Dendritic cell treated with granulocyte-macrophage colony-stimulating factor and Interleukin-4, amounts not matched to agents 40 ng/mL and 50 ng/mL, for 4 days (primary cell): ENCODE measurements at regions of chr7 and their contacts with region 1.

Region 1: GRCh38 chr7:150778738-150779301 is 21.3 kb downstream of the TMEM176B start:
- H3K4me3 Mint-ChIP-seq: peak overlapping the region; percentile 61
- H3K27ac Mint-ChIP-seq: peak overlapping the region; percentile 72
- H3K4me1 Mint-ChIP-seq: peaks cover 61% of the 10 kb centered on the region
- H3K27me3 Mint-ChIP-seq: no peaks in the 10 kb centered on the region

Region 2: DNA sequence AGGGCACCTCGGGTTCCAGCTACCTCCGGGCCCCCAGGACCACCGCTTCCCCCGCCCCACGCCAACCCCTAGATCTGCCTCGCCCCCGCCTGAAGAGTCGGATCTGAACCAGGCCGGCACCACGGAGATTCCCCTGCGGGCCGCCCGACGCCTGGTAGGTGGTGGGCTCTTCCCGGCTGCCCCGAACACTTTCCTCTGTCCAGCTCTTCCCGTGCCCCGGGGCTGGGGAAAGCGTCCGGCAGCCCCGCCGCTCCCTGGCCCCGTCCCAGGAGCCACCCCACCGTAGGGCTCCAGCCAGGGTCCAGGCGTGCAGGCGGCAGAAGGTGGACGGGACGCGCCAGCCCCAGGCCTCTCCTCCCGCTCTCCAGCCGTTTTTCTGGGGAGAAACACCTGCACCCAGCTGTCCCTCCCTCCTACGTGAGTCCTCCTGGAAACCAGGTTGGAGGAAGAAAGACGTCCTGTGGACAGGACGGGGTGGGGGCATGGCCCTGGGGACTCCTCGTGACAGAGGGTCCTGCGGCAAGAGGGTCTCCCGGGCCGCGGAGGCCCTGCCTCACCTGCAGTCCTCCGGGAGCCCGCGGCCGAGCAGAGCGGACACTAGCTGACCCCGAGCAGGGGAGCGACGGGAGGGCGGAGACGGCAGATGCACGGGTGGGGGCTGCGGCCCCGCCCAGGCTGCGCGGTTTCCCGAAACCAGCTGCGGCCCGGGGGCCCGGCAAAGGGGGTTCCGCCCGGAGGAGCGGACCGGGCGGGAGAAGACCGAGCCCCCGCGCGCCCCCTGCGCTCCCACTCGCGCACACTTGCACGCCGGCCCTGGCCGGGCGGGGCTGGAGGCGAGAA is 21.1 kb after region 1 on chr7 and contains the start of gene TMEM176B:
- intact Hi-C with region 1: loop called (anchors 2 kb)
- H3K4me3 Mint-ChIP-seq: peak within 1 kb of the TSS; percentile 96
- H3K27ac Mint-ChIP-seq: peak within 1 kb of the TSS; percentile 96
- H3K4me1 Mint-ChIP-seq: peaks cover 48% of the 10 kb centered on the region
- H3K27me3 Mint-ChIP-seq: no peaks in the 10 kb centered on the region

Region 3: GRCh38 chr7:150876817-150877526 is 98.2 kb after region 1 on chr7:
- intact Hi-C with region 1: loop called (anchors 1 kb)
- H3K4me3 Mint-ChIP-seq: peak overlapping the region; percentile 42
- H3K27ac Mint-ChIP-seq: peak overlapping the region; percentile 45
- H3K4me1 Mint-ChIP-seq: peaks cover 11% of the 10 kb centered on the region
- H3K27me3 Mint-ChIP-seq: peaks cover 18% of the 10 kb centered on the region

Region 4: GRCh38 chr7:150988230-150989226 is 209.7 kb after region 1 on chr7:
- intact Hi-C with region 1: loop called (anchors 10 kb)
- H3K4me3 Mint-ChIP-seq: peak overlapping the region; percentile 39
- H3K27ac Mint-ChIP-seq: peak overlapping the region; percentile 1
- H3K4me1 Mint-ChIP-seq: peaks cover 30% of the 10 kb centered on the region
- H3K27me3 Mint-ChIP-seq: peaks cover 66% of the 10 kb centered on the region